ENCODE measurements at regions of chr2 and their contacts with region 1.

Region 1: DNA sequence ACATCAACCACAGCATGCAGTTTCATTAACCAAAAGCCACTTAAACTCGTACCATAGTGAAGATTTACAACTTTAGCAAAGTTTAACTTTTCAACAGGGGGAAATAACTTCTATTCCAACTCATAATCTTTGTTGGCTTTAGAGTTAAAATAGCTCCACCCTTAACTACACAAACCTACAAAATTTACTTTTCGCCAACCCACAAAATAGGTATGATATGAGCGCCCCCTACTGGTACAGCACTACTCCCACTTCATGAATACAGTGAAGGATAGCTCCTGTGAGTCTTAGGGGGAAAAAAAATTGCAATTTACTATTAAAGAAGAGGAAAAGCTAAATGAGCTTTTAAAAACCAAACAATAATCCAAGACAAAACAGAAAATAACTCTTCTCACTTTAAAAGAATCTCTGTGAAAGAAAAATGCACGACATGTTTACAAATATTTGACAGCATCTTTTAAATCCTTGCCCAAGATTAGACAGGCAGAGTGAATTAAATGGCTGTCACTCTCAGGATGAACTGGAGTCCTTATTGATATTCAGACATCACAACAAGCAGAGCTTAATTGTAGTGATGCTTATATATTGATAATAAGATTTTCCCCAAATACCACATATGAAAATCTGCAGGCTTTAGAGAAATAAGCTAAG is 32.2 kb downstream of the TMEFF2 start:
- DNase-seq: peak; percentile 10 to 82 (median 51)
- ATAC-seq: peak; percentile 58
- H3K4me3 ChIP-seq: no peak overlapping the region
- H3K4me3 Mint-ChIP-seq: no peak overlapping the region
- H3K27ac ChIP-seq: no peak overlapping the region
- H3K27ac Mint-ChIP-seq: no peak overlapping the region
- H3K4me1 ChIP-seq: no peaks in the 10 kb centered on the region
- H3K4me1 Mint-ChIP-seq: peaks cover 11% of the 10 kb centered on the region
- H3K27me3 ChIP-seq: no peaks in the 10 kb centered on the region
- H3K27me3 Mint-ChIP-seq: peaks cover 14% of the 10 kb centered on the region
- CTCF ChIP-seq: peak; percentile 92

Region 2: GRCh38 chr2:191165176-191165643 is 997.3 kb before region 1 on chr2:
- CTCF ChIA-PET with region 1: interaction called, 5 read pairs
- POLR2A ChIA-PET with region 1: no interaction called
- intact Hi-C with region 1: loop called (anchors 1 to 5 kb)
- DNase-seq: peak in 6 of 14 experiments; percentile 18 to 73 (median 52)
- ATAC-seq: peak; percentile 75
- H3K4me3 ChIP-seq: no peak overlapping the region
- H3K4me3 Mint-ChIP-seq: no peak overlapping the region
- H3K27ac ChIP-seq: no peak overlapping the region
- H3K27ac Mint-ChIP-seq: no peak overlapping the region
- H3K4me1 ChIP-seq: no peaks in the 10 kb centered on the region
- H3K4me1 Mint-ChIP-seq: peaks cover 6% of the 10 kb centered on the region
- H3K27me3 ChIP-seq: no peaks in the 10 kb centered on the region
- H3K27me3 Mint-ChIP-seq: no peaks in the 10 kb centered on the region
- CTCF ChIP-seq: peak; percentile 85

Region 3: DNA sequence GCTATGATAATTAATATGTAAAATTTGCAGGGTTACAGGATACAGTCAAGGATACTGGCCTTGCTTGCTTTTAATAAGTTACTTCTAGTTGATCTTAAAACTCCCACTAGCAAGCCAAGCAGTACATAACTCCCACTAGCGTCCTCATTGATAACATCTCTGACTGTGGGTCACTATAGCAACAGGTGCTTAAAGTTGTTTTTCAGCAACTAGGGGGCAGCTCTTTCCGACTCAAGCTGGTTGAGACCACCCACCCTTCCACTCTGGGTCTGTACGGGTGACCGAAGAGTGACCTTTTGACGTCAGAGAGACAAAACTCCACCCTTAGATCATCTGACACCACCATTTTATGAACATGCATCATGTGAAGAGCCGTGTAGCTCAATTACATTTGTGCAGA is 708.8 kb before region 1 on chr2:
- CTCF ChIA-PET with region 1: no interaction called
- POLR2A ChIA-PET with region 1: no interaction called
- intact Hi-C with region 1: no loop called
- DNase-seq: no peak
- ATAC-seq: no peak
- H3K4me3 ChIP-seq: no peak overlapping the region
- H3K4me3 Mint-ChIP-seq: no peak overlapping the region
- H3K27ac ChIP-seq: no peak overlapping the region
- H3K27ac Mint-ChIP-seq: no peak overlapping the region
- H3K4me1 ChIP-seq: no peaks in the 10 kb centered on the region
- H3K4me1 Mint-ChIP-seq: no peaks in the 10 kb centered on the region
- H3K27me3 ChIP-seq: peaks cover 0 to 5% of the 10 kb centered on the region in 2 experiments
- H3K27me3 Mint-ChIP-seq: peaks cover 8% of the 10 kb centered on the region
- CTCF ChIP-seq: no peak

Region 4: GRCh38 chr2:191539068-191539467 is 623.4 kb before region 1 on chr2:
- CTCF ChIA-PET with region 1: interaction called, 3 read pairs
- POLR2A ChIA-PET with region 1: no interaction called
- intact Hi-C with region 1: loop called in 1 of 2 experiments (anchors 1 kb)
- DNase-seq: peak in 6 of 14 experiments; percentile 11 to 38 (median 18)
- ATAC-seq: no peak
- H3K4me3 ChIP-seq: no peak overlapping the region
- H3K4me3 Mint-ChIP-seq: no peak overlapping the region
- H3K27ac ChIP-seq: no peak overlapping the region
- H3K27ac Mint-ChIP-seq: no peak overlapping the region
- H3K4me1 ChIP-seq: no peaks in the 10 kb centered on the region
- H3K4me1 Mint-ChIP-seq: no peaks in the 10 kb centered on the region
- H3K27me3 ChIP-seq: no peaks in the 10 kb centered on the region
- H3K27me3 Mint-ChIP-seq: no peaks in the 10 kb centered on the region
- CTCF ChIP-seq: peak; percentile 46

Region 5: DNA sequence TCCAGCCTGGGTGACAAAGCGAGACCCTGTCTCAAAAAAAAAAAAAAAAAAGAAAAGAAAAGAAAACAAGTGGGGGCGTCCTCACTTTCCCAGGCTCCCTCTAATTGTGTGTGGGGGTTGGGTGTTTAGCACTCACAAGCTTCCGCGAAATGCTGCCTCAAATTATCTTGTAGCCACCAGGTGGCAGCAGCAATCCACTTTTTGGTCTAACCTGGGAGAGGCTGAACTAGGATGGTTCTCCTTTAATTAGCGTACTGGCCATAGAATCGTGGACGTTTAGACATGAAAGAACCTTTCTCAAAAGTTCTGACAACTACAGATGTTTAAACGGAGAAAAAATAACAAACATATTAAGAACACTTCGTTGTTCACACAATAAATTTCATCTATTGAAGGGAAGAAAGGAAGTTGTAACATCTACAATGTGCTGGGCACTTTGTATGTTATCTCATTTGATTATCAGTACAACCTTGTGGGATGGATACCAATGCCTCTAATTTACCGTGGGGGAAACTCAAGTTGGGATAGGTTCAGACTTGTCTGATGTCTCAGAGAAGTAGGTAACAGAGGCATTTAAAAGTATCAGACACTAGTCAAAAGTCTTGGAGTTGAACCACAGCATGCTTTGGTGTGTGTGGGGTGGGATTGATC is 607.3 kb before region 1 on chr2:
- CTCF ChIA-PET with region 1: interaction called, 38 read pairs
- POLR2A ChIA-PET with region 1: interaction called, 12 read pairs
- intact Hi-C with region 1: loop called (anchors 1 kb)
- DNase-seq: peak; percentile 64 to 88 (median 76)
- ATAC-seq: peak; percentile 75
- H3K4me3 ChIP-seq: no peak overlapping the region
- H3K4me3 Mint-ChIP-seq: no peak overlapping the region
- H3K27ac ChIP-seq: no peak overlapping the region
- H3K27ac Mint-ChIP-seq: no peak overlapping the region
- H3K4me1 ChIP-seq: no peaks in the 10 kb centered on the region
- H3K4me1 Mint-ChIP-seq: no peaks in the 10 kb centered on the region
- H3K27me3 ChIP-seq: no peaks in the 10 kb centered on the region
- H3K27me3 Mint-ChIP-seq: peaks cover 13% of the 10 kb centered on the region
- CTCF ChIP-seq: peak; percentile 81

Region 6: GRCh38 chr2:191566344-191566743 is 596.2 kb before region 1 on chr2:
- CTCF ChIA-PET with region 1: interaction called, 5 read pairs
- POLR2A ChIA-PET with region 1: interaction called, 3 read pairs
- intact Hi-C with region 1: loop called in 1 of 2 experiments (anchors 1 kb)
- DNase-seq: peak; percentile 49 to 83 (median 60)
- ATAC-seq: peak; percentile 54
- H3K4me3 ChIP-seq: no peak overlapping the region
- H3K4me3 Mint-ChIP-seq: no peak overlapping the region
- H3K27ac ChIP-seq: no peak overlapping the region
- H3K27ac Mint-ChIP-seq: no peak overlapping the region
- H3K4me1 ChIP-seq: peaks cover 8% of the 10 kb centered on the region
- H3K4me1 Mint-ChIP-seq: peaks cover 18% of the 10 kb centered on the region
- H3K27me3 ChIP-seq: no peaks in the 10 kb centered on the region
- H3K27me3 Mint-ChIP-seq: peaks cover 12% of the 10 kb centered on the region
- CTCF ChIP-seq: peak; percentile 84

Region 7: DNA sequence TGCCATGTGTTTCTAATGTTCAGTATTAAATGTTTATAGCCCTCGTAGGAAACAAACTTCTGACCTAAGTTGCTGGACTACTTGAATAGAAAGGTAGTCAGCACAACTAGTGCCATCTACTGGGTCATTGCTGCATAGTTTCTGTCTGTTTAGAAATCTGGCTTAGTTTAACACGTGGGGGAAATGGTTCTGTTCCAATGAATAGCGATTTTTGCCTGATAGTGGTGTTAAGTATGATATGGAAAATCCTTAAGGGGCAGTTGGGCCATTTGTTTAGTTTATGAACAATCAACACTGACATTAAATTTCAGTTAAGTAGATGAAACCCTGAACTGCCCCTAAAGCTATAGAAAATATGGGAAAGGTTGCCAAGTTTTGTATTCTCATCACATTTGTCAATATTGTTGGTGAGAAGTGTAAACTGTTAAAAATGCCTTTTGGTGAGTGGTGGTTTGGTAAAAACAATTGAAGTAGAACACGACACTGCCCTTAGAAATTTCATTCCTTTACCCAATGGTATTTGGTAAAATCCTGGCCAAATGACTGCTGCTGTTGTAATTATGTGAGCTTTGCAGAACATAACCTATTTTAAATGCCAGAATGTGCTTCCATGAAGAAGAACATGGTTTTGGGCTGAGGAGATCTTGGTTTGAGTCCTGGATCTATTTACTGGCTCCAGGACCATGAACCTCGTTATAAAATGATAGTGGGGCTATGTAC is 471.3 kb before region 1 on chr2:
- CTCF ChIA-PET with region 1: no interaction called
- POLR2A ChIA-PET with region 1: no interaction called
- intact Hi-C with region 1: loop called (anchors 2 kb)
- DNase-seq: peak in 11 of 14 experiments; percentile 13 to 85 (median 39)
- ATAC-seq: peak; percentile 93
- H3K4me3 ChIP-seq: no peak overlapping the region
- H3K4me3 Mint-ChIP-seq: no peak overlapping the region
- H3K27ac ChIP-seq: no peak overlapping the region
- H3K27ac Mint-ChIP-seq: peak overlapping the region; percentile 44
- H3K4me1 ChIP-seq: no peaks in the 10 kb centered on the region
- H3K4me1 Mint-ChIP-seq: peaks cover 19% of the 10 kb centered on the region
- H3K27me3 ChIP-seq: no peaks in the 10 kb centered on the region
- H3K27me3 Mint-ChIP-seq: no peaks in the 10 kb centered on the region
- CTCF ChIP-seq: peak; percentile 87

Region 8: DNA sequence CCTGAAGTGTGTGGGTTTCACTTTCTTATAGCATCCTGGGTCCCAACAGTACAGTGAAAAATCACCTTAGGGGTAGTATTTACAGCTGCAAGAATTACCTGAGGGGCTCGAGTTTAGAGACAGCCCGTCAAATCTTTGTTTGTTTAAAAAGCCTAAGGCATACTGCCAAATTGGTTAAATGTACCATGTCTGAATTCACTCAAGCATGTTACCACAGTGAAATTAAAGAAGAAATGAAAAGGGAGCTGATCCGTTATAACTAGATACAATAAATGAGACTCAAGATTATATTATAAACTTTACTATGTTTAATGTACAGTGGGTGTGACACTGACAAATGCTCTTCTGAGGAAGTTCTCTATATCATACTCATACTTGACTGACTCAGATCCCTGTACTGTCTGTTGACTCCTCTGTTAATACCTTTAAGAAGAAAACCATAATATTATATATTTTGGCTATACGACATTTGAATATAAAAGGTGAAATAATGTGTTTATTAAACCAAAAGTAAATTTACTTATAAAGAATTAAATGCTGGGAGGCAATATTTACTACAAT is 75.0 kb before region 1 on chr2:
- CTCF ChIA-PET with region 1: no interaction called
- POLR2A ChIA-PET with region 1: no interaction called
- intact Hi-C with region 1: no loop called
- DNase-seq: no peak
- ATAC-seq: no peak
- H3K4me3 ChIP-seq: no peak overlapping the region
- H3K4me3 Mint-ChIP-seq: no peak overlapping the region
- H3K27ac ChIP-seq: no peak overlapping the region
- H3K27ac Mint-ChIP-seq: no peak overlapping the region
- H3K4me1 ChIP-seq: no peaks in the 10 kb centered on the region
- H3K4me1 Mint-ChIP-seq: no peaks in the 10 kb centered on the region
- H3K27me3 ChIP-seq: peaks cover 0 to 3% of the 10 kb centered on the region in 2 experiments
- H3K27me3 Mint-ChIP-seq: no peaks in the 10 kb centered on the region
- CTCF ChIP-seq: no peak

Region 9: GRCh38 chr2:192236136-192236535 is 73.6 kb after region 1 on chr2:
- CTCF ChIA-PET with region 1: no interaction called
- POLR2A ChIA-PET with region 1: no interaction called
- intact Hi-C with region 1: no loop called
- DNase-seq: no peak
- ATAC-seq: no peak
- H3K4me3 ChIP-seq: no peak overlapping the region
- H3K4me3 Mint-ChIP-seq: no peak overlapping the region
- H3K27ac ChIP-seq: no peak overlapping the region
- H3K27ac Mint-ChIP-seq: no peak overlapping the region
- H3K4me1 ChIP-seq: no peaks in the 10 kb centered on the region
- H3K4me1 Mint-ChIP-seq: no peaks in the 10 kb centered on the region
- H3K27me3 ChIP-seq: no peaks in the 10 kb centered on the region
- H3K27me3 Mint-ChIP-seq: no peaks in the 10 kb centered on the region
- CTCF ChIP-seq: no peak

Measured in CD4-positive, alpha-beta T cell (primary cell).